Endothelial cell of umbilical vein (primary cell): ENCODE measurements at regions of chr19 and their contacts with region 1.

Region 1: GRCh38 chr19:36114763-36115452 is at the start of gene POLR2I:
- DNase-seq: peak; percentile 100
- H3K4me3 ChIP-seq: peak within 1 kb of the TSS; percentile 68 to 81 (median 79)
- H3K27ac ChIP-seq: peak within 1 kb of the TSS; percentile 68
- H3K4me1 ChIP-seq: peaks cover 15% of the 10 kb centered on the region
- H3K27me3 ChIP-seq: no peaks in the 10 kb centered on the region
- CTCF ChIP-seq: no peak
- POLR2A ChIP-seq: peak; percentile 59
- total RNA-seq, gene POLR2I: 63.3 and 64.8 TPM in 2 replicates

Region 2: DNA sequence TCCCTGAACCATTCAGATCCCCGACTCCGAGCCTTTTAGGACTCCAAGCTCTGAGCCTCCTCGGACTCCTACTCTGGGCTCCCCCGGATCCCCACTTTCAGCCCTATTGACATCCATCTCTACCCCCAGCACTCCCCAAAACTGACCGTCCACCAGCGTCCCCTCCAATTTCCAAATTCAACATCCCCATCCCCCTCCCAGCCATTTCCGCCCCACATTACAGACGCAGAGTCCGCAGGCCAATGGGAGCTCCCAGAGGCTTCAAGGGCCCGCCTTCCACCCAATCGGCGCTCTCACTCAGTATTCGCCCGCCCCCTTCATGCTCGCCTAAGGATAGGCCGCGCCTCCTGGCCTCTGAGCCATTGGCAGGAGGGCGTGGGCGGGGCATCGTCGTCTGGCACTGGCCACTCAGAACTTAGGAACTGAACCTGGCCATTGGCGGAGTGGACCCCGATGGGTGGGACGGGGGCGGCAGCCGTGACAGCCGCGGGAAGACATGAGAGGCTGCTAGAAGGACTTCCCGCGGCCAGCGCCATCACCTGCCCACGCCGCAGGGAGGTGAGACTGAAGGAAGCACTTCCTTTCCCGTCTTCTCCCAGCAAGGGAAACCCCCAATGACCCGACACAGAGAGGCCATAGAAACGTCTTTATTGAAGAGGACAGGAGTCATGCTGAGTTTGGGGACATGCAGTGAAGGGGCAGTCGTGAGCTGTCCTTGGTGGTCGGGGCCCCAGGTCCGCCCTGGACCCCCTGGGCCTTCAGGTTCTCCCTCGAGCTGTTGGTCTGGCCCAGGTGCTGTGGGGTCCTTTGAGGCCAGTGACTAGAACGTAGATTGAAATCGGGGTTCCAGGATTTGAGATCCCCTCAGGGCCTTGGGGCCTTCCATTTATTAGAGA is 100.6 kb before region 1 on chr19 and contains the start of gene ALKBH6:
- CTCF ChIA-PET with region 1: no interaction called
- POLR2A ChIA-PET with region 1: no interaction called
- dilution Hi-C with region 1: no loop called
- intact Hi-C with region 1: loop called (anchors 1 kb)
- DNase-seq: peak; percentile 99
- H3K4me3 ChIP-seq: peak within 1 kb of the TSS; percentile 69 to 96 (median 91)
- H3K27ac ChIP-seq: peak within 1 kb of the TSS; percentile 65
- H3K4me1 ChIP-seq: peaks cover 14% of the 10 kb centered on the region
- H3K27me3 ChIP-seq: no peaks in the 10 kb centered on the region
- CTCF ChIP-seq: no peak
- POLR2A ChIP-seq: peak; percentile 23
- total RNA-seq, gene ALKBH6: 17.3 and 21.4 TPM in 2 replicates

Region 3: DNA sequence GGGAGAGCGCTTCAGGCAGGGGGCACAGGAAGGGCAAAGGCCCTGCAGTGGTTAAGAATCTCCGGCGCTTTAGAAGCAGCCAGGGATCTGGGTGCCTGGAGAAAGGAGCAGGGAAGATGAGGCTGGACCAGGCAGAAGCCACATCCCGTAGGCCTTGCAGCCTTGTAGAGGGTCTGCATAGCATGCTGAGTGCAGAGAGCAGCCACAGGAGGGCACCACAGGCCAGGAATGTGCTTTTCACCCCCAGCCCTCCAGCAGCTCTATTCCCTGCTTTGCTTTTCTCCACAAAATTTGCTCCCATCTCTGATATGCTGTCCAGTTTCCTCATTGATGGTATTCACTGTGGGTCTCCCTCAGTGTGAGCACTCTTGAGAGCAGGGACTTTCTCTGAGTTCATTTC is 54.5 kb before region 1 on chr19:
- CTCF ChIA-PET with region 1: interaction called, 32 read pairs
- POLR2A ChIA-PET with region 1: interaction called, 3 read pairs
- dilution Hi-C with region 1: no loop called
- intact Hi-C with region 1: no loop called
- DNase-seq: peak; percentile 69
- H3K4me3 ChIP-seq: no peak overlapping the region
- H3K27ac ChIP-seq: no peak overlapping the region
- H3K4me1 ChIP-seq: peaks cover 8% of the 10 kb centered on the region
- H3K27me3 ChIP-seq: no peaks in the 10 kb centered on the region
- CTCF ChIP-seq: peak; percentile 72 to 89
- POLR2A ChIP-seq: no peak

Region 4: DNA sequence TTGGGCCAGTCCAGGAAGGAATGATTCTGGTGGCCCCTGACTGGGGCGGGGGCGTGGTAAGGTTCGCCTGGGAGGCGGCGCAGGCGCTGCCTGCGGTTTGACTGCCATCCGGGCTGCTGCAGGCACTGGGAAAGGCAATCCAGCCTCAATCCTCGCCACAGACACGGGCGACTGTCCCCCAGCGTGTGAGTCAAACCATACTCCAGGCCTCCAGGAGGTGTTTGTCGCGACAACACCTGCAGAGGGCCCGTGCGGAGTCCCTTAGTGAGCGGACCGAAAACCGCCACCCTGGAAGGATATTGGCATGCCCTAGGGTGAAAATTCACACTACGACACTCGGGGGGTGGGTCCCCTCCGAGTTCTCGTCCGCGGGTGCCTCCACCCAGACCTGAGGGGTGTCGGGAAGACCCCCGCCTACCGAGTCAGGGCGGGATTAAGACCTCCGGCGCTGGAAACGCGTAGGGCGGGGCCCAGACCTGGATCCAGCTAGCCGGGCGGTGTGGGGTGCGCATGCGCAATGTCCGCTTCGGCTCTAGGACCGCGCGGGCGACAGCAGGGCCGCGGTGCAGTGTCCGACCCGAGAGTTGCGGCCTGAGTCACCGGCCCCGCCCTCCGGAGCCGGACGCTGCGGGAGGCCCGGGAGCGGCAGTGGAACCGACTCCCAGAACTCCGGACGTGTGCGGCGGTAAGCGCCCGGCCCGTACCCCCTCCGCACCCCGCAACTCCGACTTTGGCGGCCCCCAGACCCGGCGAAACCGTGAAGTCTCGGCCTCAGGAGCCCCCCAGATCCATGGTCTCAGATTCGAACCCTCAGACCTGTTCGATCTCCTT is 24.8 kb after region 1 on chr19 and contains the start of gene CAPNS1:
- CTCF ChIA-PET with region 1: interaction called, 3 read pairs
- POLR2A ChIA-PET with region 1: no interaction called
- dilution Hi-C with region 1: no loop called
- intact Hi-C with region 1: loop called (anchors 1 kb)
- DNase-seq: peak; percentile 97
- H3K4me3 ChIP-seq: peak within 1 kb of the TSS; percentile 89 to 97 (median 91)
- H3K27ac ChIP-seq: peak within 1 kb of the TSS; percentile 91
- H3K4me1 ChIP-seq: peaks cover 20% of the 10 kb centered on the region
- H3K27me3 ChIP-seq: no peaks in the 10 kb centered on the region
- CTCF ChIP-seq: no peak
- POLR2A ChIP-seq: peak; percentile 96
- total RNA-seq, gene CAPNS1: 722 and 777 TPM in 2 replicates

Region 5: GRCh38 chr19:36160821-36161596 is 46.1 kb after region 1 on chr19:
- CTCF ChIA-PET with region 1: no interaction called
- POLR2A ChIA-PET with region 1: no interaction called
- dilution Hi-C with region 1: no loop called
- intact Hi-C with region 1: no loop called
- DNase-seq: no peak
- H3K4me3 ChIP-seq: no peak overlapping the region
- H3K27ac ChIP-seq: no peak overlapping the region
- H3K4me1 ChIP-seq: no peaks in the 10 kb centered on the region
- H3K27me3 ChIP-seq: no peaks in the 10 kb centered on the region
- CTCF ChIP-seq: no peak
- POLR2A ChIP-seq: no peak